ENCODE measurements at regions of chr19 and their contacts with region 1.

Region 1: DNA sequence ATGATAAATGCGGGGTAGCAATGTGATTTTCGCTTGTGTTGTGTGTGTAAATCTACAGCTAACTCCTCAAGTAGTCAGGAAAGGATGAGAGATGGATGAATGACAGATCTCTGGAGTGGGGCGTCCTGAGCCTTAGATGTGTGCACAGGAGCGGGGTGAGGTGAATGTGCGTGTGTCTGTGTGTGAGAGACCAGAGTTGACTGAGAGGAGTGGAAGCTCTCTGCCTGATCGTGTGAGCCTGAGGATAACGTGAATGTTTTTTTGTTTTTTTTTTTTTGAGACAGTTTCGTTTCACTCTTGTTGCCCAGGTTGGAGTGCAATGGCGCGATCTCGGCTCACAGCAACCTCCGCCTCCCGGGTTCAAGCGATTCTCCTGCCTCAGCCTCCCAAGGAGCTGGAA is 805 bp downstream of the ZNF461 start:
- DNase-seq: no peak
- ATAC-seq: no peak
- H3K4me3 ChIP-seq: peak overlapping the region in 9 of 10 donors; percentile 65 to 89 (median 82)
- H3K27ac ChIP-seq: peak overlapping the region in 1 of 10 donors; percentile 88
- H3K4me1 ChIP-seq: peaks cover 0 to 23% (median 16%) of the 10 kb centered on the region in 9 donors
- H3K27me3 ChIP-seq: no peaks in the 10 kb centered on the region
- CTCF ChIP-seq: no peak

Region 2: DNA sequence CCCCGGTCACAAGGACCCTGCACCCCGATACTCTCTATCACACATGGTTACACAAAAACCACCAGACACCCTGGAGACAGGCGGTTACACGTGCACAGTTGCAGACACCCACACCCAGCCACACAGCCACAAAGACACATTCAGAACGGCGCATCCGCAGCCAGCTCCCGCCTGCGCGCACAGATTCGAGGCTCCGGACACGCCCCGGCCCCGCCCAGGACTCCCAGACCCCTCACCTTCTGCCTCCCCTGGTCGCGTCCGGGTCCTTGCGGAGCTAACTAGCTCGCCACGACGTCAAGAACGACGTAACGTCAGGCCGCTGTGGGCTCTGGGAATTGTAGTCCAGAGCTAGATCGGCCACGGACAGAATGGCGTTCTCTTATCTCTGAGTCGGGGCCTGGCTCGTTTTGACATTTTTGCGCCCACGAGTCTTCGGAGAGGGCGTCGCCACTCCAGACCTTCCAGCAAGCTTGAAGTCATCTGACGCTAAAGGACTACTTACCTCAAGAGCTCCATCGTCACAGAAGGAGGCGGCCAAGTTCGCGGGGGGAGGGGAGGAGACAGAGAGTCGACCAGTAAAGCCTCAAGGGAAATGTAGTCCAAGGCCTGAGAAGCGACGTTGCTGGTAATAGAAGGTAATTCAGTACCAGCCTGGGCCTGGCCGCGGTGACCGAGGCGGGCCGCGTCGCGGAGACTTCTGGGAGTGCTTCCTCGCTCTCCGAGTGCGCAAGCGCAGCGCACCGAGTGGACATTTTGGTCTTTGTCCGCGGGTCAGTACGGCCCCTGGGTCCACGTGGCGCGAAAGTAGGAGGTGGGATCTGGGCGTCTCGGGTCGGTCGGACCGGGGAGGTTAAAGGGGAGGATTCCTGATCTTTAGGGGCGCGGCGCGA is 451.2 kb before region 1 on chr19 and contains the starts of genes ZNF146 and ZNF565:
- intact Hi-C with region 1: loop called in 1 of 10 experiments (anchors 10 kb)
- DNase-seq: peak; percentile 98
- ATAC-seq: peak; percentile 96 to 98 (median 97)
- H3K4me3 ChIP-seq: peak within 1 kb of the TSS; percentile 58 to 85 (median 76)
- H3K27ac ChIP-seq: peak within 1 kb of the TSS; percentile 88 to 96 (median 92)
- H3K4me1 ChIP-seq: peaks cover 0 to 44% (median 18%) of the 10 kb centered on the region in 9 donors
- H3K27me3 ChIP-seq: no peaks in the 10 kb centered on the region
- CTCF ChIP-seq: peak in 1 of 9 donors; percentile 8
- total RNA-seq, gene ZNF146: 25.7 to 42.1 (median 32.6) TPM
- total RNA-seq, gene ZNF565: 2.6 to 5.1 (median 3.6) TPM

Region 3: DNA sequence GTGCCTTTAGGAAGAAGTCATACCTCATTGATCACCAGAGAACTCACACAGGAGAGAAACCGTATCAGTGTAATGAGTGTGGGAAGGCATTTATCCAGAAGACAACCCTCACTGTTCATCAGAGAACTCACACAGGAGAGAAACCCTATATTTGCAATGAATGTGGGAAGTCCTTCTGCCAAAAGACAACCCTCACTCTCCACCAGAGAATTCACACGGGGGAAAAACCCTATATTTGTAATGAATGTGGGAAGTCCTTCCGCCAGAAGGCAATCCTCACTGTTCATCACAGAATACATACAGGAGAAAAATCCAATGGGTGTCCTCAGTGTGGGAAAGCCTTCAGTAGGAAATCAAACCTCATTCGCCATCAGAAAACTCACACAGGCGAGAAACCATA is 38.8 kb before region 1 on chr19:
- intact Hi-C with region 1: no loop called
- DNase-seq: no peak
- ATAC-seq: no peak
- H3K4me3 ChIP-seq: no peak overlapping the region
- H3K27ac ChIP-seq: no peak overlapping the region
- H3K4me1 ChIP-seq: no peaks in the 10 kb centered on the region
- H3K27me3 ChIP-seq: no peaks in the 10 kb centered on the region
- CTCF ChIP-seq: no peak

Region 4: GRCh38 chr19:36687214-36688056 is 21.6 kb after region 1 on chr19 and contains the start of gene ZNF567:
- intact Hi-C with region 1: loop called in 1 of 10 experiments (anchors 2 kb)
- DNase-seq: peak; percentile 98
- ATAC-seq: peak; percentile 99 to 100 (median 99)
- H3K4me3 ChIP-seq: peak within 1 kb of the TSS; percentile 60 to 89 (median 80)
- H3K27ac ChIP-seq: peak within 1 kb of the TSS in 9 of 10 donors; percentile 38 to 86 (median 75)
- H3K4me1 ChIP-seq: peaks cover 4 to 26% (median 19%) of the 10 kb centered on the region in 9 donors
- H3K27me3 ChIP-seq: no peaks in the 10 kb centered on the region
- CTCF ChIP-seq: no peak
- total RNA-seq, gene ZNF567: 1.9 to 4.7 (median 3.7) TPM

Region 5: GRCh38 chr19:36771261-36772231 is 105.7 kb after region 1 on chr19:
- intact Hi-C with region 1: no loop called
- DNase-seq: peak; percentile 48 to 90
- ATAC-seq: peak; percentile 12 to 69 (median 58)
- H3K4me3 ChIP-seq: peak overlapping the region; percentile 26 to 96 (median 72)
- H3K27ac ChIP-seq: peak overlapping the region; percentile 20 to 92 (median 85)
- H3K4me1 ChIP-seq: peaks cover 0 to 26% (median 17%) of the 10 kb centered on the region in 9 donors
- H3K27me3 ChIP-seq: no peaks in the 10 kb centered on the region
- CTCF ChIP-seq: no peak

Region 6: GRCh38 chr19:36819130-36819630 is 153.3 kb after region 1 on chr19:
- intact Hi-C with region 1: no loop called
- DNase-seq: no peak
- ATAC-seq: no peak
- H3K4me3 ChIP-seq: no peak overlapping the region
- H3K27ac ChIP-seq: no peak overlapping the region
- H3K4me1 ChIP-seq: no peaks in the 10 kb centered on the region
- H3K27me3 ChIP-seq: no peaks in the 10 kb centered on the region
- CTCF ChIP-seq: no peak

Region 7: GRCh38 chr19:36837906-36838783 is 172.3 kb after region 1 on chr19 and contains the start of gene ZNF790:
- intact Hi-C with region 1: loop called in 2 of 10 experiments (anchors 5 kb)
- DNase-seq: peak; percentile 85 to 93
- ATAC-seq: peak; percentile 98 to 99 (median 99)
- H3K4me3 ChIP-seq: peak within 1 kb of the TSS; percentile 56 to 80 (median 76)
- H3K27ac ChIP-seq: peak within 1 kb of the TSS; percentile 78 to 94 (median 92)
- H3K4me1 ChIP-seq: peaks cover 0 to 24% (median 14%) of the 10 kb centered on the region in 9 donors
- H3K27me3 ChIP-seq: no peaks in the 10 kb centered on the region
- CTCF ChIP-seq: no peak
- total RNA-seq, gene ZNF790: 4.5 to 11.8 (median 8.7) TPM